Motor neuron (in vitro differentiated cells): ENCODE measurements at regions of chr4 and their contacts with region 1.

Region 1: GRCh38 chr4:151604238-151604637 is 156.6 kb downstream of the GATB start:
- ATAC-seq: peak in 3 of 8 experiments; percentile 19 to 75 (median 58)
- H3K4me3 ChIP-seq: no peak overlapping the region
- H3K27ac ChIP-seq: no peak overlapping the region
- H3K4me1 ChIP-seq: peaks cover 6 to 8% of the 10 kb centered on the region in 2 donors

Region 2: DNA sequence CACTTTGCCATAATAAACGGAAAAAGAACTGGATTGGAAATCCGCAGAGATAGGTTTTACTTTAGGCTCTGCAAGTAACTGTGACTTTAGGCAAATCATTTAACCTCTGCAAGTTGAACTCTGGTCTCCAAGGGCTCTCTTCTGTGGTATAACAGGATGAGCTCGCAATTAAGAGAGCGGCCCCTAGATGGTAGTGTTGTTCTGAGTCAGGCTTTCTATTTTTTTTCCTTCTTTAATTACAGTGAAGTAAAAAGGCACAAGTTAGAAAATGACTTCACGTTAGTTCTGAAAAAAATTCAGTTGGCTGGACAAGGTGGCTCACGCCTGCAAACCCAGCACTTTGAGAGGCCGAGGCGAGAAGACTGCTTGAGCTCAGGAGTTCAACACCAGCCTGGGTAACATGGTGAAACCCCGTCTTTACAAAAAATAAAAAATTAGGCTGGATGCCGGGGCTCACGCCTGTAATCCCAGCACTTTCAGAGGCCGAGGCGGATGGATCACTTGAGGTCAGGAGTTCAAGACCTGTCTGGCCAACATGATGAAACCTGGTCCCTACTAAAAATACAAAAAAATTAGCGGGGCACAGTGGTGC is 486.8 kb before region 1 on chr4:
- in situ Hi-C with region 1: loop called in 2 of 9 experiments (anchors 25 kb)
- ATAC-seq: peak; percentile 49 to 66 (median 62)
- H3K4me3 ChIP-seq: no peak overlapping the region
- H3K27ac ChIP-seq: no peak overlapping the region
- H3K4me1 ChIP-seq: no peaks in the 10 kb centered on the region

Region 3: GRCh38 chr4:151147000-151147399 is 457.2 kb before region 1 on chr4:
- in situ Hi-C with region 1: loop called in 1 of 9 experiments (anchors 25 kb)
- ATAC-seq: peak in 3 of 8 experiments; percentile 50 to 85 (median 55)
- H3K4me3 ChIP-seq: no peak overlapping the region
- H3K27ac ChIP-seq: no peak overlapping the region
- H3K4me1 ChIP-seq: no peaks in the 10 kb centered on the region

Region 4: GRCh38 chr4:151362404-151363164 is 241.7 kb before region 1 on chr4:
- in situ Hi-C with region 1: loop called in 1 of 9 experiments (anchors 25 kb)
- ATAC-seq: peak; percentile 70 to 99 (median 85)
- H3K4me3 ChIP-seq: no peak overlapping the region
- H3K27ac ChIP-seq: no peak overlapping the region
- H3K4me1 ChIP-seq: no peaks in the 10 kb centered on the region